ENCODE measurements at regions of chr4 and their contacts with region 1.

Region 1: DNA sequence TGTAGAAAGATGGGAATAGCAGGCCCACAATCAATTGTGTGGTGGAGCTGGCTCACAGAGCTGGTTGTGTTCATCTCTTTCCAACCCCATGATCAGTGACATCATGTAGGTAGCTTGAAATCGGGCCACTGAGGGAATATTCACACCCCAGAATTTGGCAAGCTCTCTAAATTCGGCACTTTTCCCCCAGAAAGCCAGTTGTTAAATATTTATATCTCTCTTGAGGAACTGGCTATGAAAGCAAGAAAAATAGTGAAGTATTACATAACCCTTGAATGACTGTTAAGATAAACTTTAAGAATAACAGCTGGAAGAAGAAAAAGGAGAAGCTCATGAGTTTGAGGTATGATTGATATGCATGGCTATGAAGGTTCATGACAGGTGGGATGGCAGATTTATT is 38.9 kb downstream of the GPRIN3 start:
- DNase-seq: no peak
- H3K4me3 Mint-ChIP-seq: no peak overlapping the region
- H3K27ac Mint-ChIP-seq: no peak overlapping the region
- H3K4me1 Mint-ChIP-seq: peaks cover 88% of the 10 kb centered on the region
- H3K27me3 Mint-ChIP-seq: no peaks in the 10 kb centered on the region

Region 2: DNA sequence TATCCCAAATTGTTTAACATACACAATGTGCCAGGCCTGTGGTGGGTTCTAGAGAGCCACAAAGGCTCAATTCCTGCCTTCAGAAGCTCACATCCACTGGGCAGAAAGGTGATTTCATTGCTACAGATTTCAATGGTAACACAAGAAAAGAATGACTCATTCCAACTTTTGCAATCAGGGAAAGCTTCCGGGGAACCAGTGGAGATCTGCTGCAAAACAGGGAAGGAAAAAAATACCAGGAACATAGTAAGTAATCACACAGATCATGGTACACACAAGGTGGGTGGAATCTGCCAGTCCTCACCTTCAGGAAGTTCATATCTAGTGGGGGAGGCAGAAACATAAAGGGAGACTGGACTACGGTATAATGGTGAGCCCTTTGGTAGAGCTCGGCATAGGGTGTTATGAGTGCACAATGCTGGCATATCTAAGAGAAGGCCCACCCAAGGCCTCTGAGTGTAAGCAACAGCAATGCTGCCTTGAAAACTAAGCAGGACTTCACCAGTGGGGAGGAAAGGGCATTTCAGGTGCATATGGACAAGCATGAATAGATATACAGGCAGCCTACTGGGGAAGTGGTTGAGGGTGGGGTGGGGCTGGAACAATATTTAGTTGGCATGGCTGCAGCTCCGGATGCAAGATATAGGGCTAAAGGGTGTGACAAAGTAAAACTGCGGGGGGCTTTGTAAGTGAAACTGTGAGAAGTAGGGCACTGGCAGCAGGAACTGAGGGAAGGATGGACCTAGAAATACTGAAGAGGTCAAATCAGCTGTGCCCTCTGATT is 14.7 kb after region 1 on chr4:
- CTCF ChIA-PET with region 1: interaction called, 6 read pairs
- POLR2A ChIA-PET with region 1: interaction called, 6 read pairs
- intact Hi-C with region 1: loop called (anchors 1 kb)
- DNase-seq: peak; percentile 65
- H3K4me3 Mint-ChIP-seq: peak overlapping the region; percentile 20
- H3K27ac Mint-ChIP-seq: peak overlapping the region; percentile 77
- H3K4me1 Mint-ChIP-seq: peaks cover 72% of the 10 kb centered on the region
- H3K27me3 Mint-ChIP-seq: no peaks in the 10 kb centered on the region